T-cell (primary cell): ENCODE measurements at regions of chr10 and their contacts with region 1.

Region 1: GRCh38 chr10:8033812-8034465 is 20.5 kb upstream of the GATA3 start:
- DNase-seq: peak in 2 of 35 experiments; percentile 3 to 29
- ATAC-seq: peak in 1 of 4 experiments; percentile 49
- H3K4me3 ChIP-seq: peak overlapping the region; percentile 5 to 53
- H3K4me3 Mint-ChIP-seq: peak overlapping the region in 1 of 3 donors; percentile 34
- H3K27ac ChIP-seq: no peak overlapping the region
- H3K27ac Mint-ChIP-seq: no peak overlapping the region
- H3K4me1 ChIP-seq: peaks cover 6 to 45% of the 10 kb centered on the region in 2 experiments
- H3K4me1 Mint-ChIP-seq: peaks cover 27 to 32% (median 27%) of the 10 kb centered on the region in 3 donors
- H3K27me3 ChIP-seq: peaks cover 9 to 70% of the 10 kb centered on the region in 2 experiments
- H3K27me3 Mint-ChIP-seq: peaks cover 45 to 66% of the 10 kb centered on the region in 2 donors

Region 2: GRCh38 chr10:6563075-6563474 is 1470.9 kb before region 1 on chr10:
- CTCF ChIA-PET with region 1: interaction called in 1 of 2 experiments, 10 read pairs
- POLR2A ChIA-PET with region 1: no interaction called
- DNase-seq: peak in 10 of 35 experiments; percentile 8 to 59 (median 28)
- ATAC-seq: peak; percentile 48 to 69 (median 51)
- H3K4me3 ChIP-seq: no peak overlapping the region
- H3K4me3 Mint-ChIP-seq: peak overlapping the region; percentile 55 to 71 (median 65)
- H3K27ac ChIP-seq: peak overlapping the region; percentile 37
- H3K27ac Mint-ChIP-seq: peak overlapping the region; percentile 87 to 88
- H3K4me1 ChIP-seq: peaks cover 41 to 74% of the 10 kb centered on the region in 2 experiments
- H3K4me1 Mint-ChIP-seq: peaks cover 94% of the 10 kb centered on the region in 3 donors
- H3K27me3 ChIP-seq: no peaks in the 10 kb centered on the region
- H3K27me3 Mint-ChIP-seq: no peaks in the 10 kb centered on the region

Region 3: DNA sequence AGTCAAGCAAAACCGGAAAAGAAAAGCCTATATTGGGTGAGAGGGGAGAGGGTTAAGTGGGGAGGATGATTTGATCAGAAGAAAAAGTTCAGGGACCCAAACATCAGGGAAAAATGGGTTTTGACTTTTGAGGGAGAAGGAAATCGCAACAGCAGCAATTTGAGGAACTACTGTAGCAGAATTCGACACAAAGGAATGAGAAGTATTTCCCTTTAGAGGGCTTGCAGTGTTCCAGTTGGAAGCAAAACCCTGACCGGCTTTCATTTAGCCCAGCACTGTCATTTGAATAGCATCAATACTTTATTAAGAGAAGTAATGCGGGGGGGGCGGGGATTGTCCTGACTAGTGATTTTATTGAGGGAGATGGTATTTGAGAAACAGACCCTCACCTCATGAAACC is 16.7 kb before region 1 on chr10:
- CTCF ChIA-PET with region 1: no interaction called
- POLR2A ChIA-PET with region 1: no interaction called
- DNase-seq: no peak
- ATAC-seq: no peak
- H3K4me3 ChIP-seq: no peak overlapping the region
- H3K4me3 Mint-ChIP-seq: no peak overlapping the region
- H3K27ac ChIP-seq: no peak overlapping the region
- H3K27ac Mint-ChIP-seq: no peak overlapping the region
- H3K4me1 ChIP-seq: no peaks in the 10 kb centered on the region
- H3K4me1 Mint-ChIP-seq: peaks cover 0 to 2% (median 2%) of the 10 kb centered on the region in 3 donors
- H3K27me3 ChIP-seq: no peaks in the 10 kb centered on the region
- H3K27me3 Mint-ChIP-seq: peaks cover 0 to 3% of the 10 kb centered on the region in 2 donors

Region 4: DNA sequence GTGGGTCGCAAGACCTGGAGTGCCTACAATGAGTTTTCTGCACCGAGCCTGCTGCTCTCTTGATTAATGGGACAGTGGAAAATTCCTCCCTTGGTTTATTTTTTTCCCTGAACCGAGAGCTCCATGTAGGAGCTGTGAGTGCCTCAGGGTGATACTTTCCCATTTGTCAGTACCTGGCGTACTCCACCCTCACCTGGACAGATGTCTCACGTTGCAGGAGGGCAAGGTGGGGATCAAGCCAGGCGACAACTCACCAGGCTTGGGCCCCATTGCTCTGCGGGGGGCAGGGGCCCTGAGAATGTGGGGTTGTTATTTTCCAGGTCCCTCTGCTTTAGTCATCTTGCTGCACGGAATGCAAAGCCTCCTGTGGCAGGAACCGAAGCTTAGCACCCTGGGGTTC is 63.8 kb after region 1 on chr10:
- CTCF ChIA-PET with region 1: interaction called in 1 of 2 experiments, 10 read pairs
- POLR2A ChIA-PET with region 1: no interaction called
- DNase-seq: no peak
- ATAC-seq: no peak
- H3K4me3 ChIP-seq: no peak overlapping the region
- H3K4me3 Mint-ChIP-seq: no peak overlapping the region
- H3K27ac ChIP-seq: no peak overlapping the region
- H3K27ac Mint-ChIP-seq: no peak overlapping the region
- H3K4me1 ChIP-seq: no peaks in the 10 kb centered on the region
- H3K4me1 Mint-ChIP-seq: peaks cover 0 to 1% (median 1%) of the 10 kb centered on the region in 3 donors
- H3K27me3 ChIP-seq: no peaks in the 10 kb centered on the region
- H3K27me3 Mint-ChIP-seq: no peaks in the 10 kb centered on the region